PC-3 (cell line): ENCODE measurements at regions of chr2 and their contacts with region 1.

Region 1: DNA sequence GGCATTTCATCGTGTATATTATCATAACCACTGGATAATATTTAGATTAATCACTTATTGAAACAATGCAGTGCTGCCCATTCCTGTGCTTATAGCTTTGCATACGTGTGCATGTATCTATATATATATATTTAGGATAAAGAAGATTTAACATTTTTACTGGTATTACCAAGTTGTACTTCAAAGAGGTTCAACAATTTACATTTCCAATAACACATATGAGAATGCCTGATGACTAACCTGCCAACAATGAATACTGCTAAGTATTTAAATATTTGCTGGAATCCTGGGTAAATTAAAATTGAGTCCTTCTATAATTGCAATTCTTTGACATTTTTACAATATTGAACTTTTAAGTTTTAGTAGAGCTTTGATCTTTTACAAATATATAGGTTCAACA is 111.4 kb downstream of the SLC39A10 start:
- DNase-seq: peak; percentile 30
- ATAC-seq: peak; percentile 54; the same call in 1 of the 2 replicates
- H3K4me3 ChIP-seq: no peak overlapping the region
- H3K27ac ChIP-seq: no peak overlapping the region
- H3K4me1 ChIP-seq: peaks cover 4% of the 10 kb centered on the region; the same call in 1 of the 2 replicates
- H3K27me3 ChIP-seq: no peaks in the 10 kb centered on the region
- CTCF ChIP-seq: no peak

Region 2: GRCh38 chr2:195838002-195838401 is 69.6 kb after region 1 on chr2:
- CTCF ChIA-PET with region 1: no interaction called
- POLR2A ChIA-PET with region 1: interaction called, 12 read pairs
- intact Hi-C with region 1: no loop called
- DNase-seq: no peak
- ATAC-seq: no peak
- H3K4me3 ChIP-seq: no peak overlapping the region
- H3K27ac ChIP-seq: 0 out of 2 replicates have a peak overlapping the region, but pooled peaks have one; percentile 12
- H3K4me1 ChIP-seq: peaks cover 5% of the 10 kb centered on the region; the same call in 1 of the 2 replicates
- H3K27me3 ChIP-seq: no peaks in the 10 kb centered on the region
- CTCF ChIP-seq: no peak